Transverse colon (tissue), 4 donors: ENCODE measurements at regions of chr1 and their contacts with region 1.

Region 1: GRCh38 chr1:1137256-1138045 is 21.6 kb upstream of the C1orf159 start:
- DNase-seq: peak; percentile 80
- H3K4me3 ChIP-seq: peak overlapping the region; percentile 23 to 49 (median 34)
- H3K27ac ChIP-seq: peak overlapping the region; percentile 88 to 93 (median 92)
- H3K4me1 ChIP-seq: peaks cover 12 to 57% (median 39%) of the 10 kb centered on the region in 4 donors
- H3K27me3 ChIP-seq: peaks cover 13% of the 10 kb centered on the region
- CTCF ChIP-seq: no peak
- EP300 ChIP-seq: no peak
- POLR2A ChIP-seq: no peak

Region 2: DNA sequence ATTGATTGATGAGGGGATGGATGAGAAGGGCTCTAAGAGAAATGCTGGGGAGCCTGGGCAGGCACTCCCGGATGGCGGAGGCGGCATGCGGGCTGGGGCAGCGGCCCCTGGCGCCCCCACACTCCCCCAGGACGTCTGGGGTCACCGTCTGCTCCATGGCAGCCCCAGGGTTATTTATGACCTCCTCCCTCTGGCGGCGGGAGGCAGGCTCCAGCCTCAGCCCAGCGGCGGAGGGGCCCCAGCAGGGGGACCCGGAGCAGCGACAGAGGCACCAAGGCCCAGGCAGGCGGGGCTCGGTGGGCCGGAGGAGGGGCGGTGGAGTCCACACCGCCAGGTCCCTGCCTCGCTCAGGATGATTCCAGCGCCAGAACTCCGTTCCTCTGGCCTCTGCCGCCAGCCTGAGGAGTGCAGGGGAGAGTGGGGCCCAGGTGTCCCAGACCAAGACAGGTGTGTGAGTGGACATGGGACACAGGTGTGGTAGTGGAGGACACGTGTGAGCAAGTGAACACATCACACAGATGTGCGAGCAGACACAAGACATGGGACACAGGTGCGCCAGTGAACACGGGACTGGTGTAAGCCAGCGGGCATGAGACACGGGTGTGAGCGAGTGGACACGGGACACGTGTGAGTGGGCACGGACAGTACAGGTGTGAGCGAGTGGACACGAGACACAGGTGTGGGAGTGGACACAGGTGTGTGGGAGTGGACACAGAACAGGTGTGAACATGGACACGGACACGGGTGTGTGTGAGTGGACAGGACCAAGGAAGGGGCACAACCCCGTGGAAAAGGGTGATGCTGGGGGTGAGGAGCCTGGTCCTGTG is 216.2 kb before region 1 on chr1:
- in situ Hi-C with region 1: no loop called
- intact Hi-C with region 1: no loop called
- DNase-seq: peak; percentile 72
- H3K4me3 ChIP-seq: no peak overlapping the region
- H3K27ac ChIP-seq: no peak overlapping the region
- H3K4me1 ChIP-seq: peaks cover 24 to 53% (median 41%) of the 10 kb centered on the region in 4 donors
- H3K27me3 ChIP-seq: peaks cover 100% of the 10 kb centered on the region
- CTCF ChIP-seq: peak; percentile 49 to 62 (median 54)
- EP300 ChIP-seq: no peak
- POLR2A ChIP-seq: no peak

Region 3: DNA sequence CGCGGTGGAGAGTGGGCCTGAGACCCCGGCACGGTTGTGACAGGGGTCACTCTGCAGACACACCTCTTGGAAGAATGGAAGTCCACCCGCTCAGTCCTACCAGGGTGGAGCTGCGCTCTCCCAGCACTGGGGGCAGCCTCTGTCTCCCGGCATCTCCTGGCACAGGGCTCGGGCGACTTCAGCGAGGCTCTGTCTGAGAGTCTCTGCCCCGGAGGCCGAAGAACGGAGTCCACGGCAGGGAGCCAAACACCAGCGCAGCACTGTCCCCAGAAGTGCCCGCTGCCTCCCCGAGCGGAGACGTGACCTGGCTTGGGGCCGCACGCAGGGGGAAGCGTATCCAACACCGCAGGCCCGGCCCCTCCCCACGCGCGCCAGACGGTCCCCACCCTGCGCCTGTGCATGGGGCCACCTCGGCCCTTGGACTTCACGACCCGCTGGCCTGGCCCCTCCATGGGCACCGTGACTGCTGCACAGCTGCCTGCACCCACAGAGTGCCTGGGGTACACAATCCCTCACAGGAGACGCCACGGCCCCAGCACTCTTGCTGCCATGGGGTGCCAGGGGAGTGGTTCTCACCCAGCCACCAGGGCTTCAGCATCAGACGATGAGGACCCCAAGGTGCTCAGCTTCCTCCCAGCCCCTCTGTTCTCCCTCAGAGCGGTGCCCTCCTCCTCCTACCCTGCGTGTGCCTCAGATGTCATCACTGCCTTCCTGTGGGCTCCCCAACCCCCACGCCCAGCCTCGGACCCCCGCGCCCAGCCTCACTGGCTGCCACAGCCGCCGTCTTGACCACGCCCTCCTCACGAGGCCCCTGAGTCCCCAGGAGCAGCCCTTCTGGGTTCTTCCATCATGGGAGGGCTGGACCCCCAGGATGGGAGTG is 48.4 kb before region 1 on chr1:
- in situ Hi-C with region 1: no loop called
- intact Hi-C with region 1: loop called (anchors 1 kb)
- DNase-seq: peak; percentile 5
- H3K4me3 ChIP-seq: no peak overlapping the region
- H3K27ac ChIP-seq: no peak overlapping the region
- H3K4me1 ChIP-seq: no peaks in the 10 kb centered on the region
- H3K27me3 ChIP-seq: no peaks in the 10 kb centered on the region
- CTCF ChIP-seq: no peak
- EP300 ChIP-seq: no peak
- POLR2A ChIP-seq: no peak